GM12878 (cell line): ENCODE measurements at regions of chr12 and their contacts with region 1.

Region 1: GRCh38 chr12:103965590-103966504 is at the start of gene TDG:
- DNase-seq: peak; percentile 97
- ATAC-seq: peak; percentile 96
- H3K4me3 ChIP-seq: peak within 1 kb of the TSS; percentile 92
- H3K27ac ChIP-seq: peak within 1 kb of the TSS; percentile 94
- H3K4me1 ChIP-seq: peaks cover 10% of the 10 kb centered on the region
- H3K27me3 ChIP-seq: no peaks in the 10 kb centered on the region
- CTCF ChIP-seq: peak in 1 of 3 experiments; percentile 23; a peak in 1 of 6 replicates
- EP300 ChIP-seq: no peak
- POLR2A ChIP-seq: peak; percentile 96
- RAD21 ChIP-seq: no peak
- polyA plus RNA-seq, gene TDG: 29.7 to 33.7 TPM

Region 2: DNA sequence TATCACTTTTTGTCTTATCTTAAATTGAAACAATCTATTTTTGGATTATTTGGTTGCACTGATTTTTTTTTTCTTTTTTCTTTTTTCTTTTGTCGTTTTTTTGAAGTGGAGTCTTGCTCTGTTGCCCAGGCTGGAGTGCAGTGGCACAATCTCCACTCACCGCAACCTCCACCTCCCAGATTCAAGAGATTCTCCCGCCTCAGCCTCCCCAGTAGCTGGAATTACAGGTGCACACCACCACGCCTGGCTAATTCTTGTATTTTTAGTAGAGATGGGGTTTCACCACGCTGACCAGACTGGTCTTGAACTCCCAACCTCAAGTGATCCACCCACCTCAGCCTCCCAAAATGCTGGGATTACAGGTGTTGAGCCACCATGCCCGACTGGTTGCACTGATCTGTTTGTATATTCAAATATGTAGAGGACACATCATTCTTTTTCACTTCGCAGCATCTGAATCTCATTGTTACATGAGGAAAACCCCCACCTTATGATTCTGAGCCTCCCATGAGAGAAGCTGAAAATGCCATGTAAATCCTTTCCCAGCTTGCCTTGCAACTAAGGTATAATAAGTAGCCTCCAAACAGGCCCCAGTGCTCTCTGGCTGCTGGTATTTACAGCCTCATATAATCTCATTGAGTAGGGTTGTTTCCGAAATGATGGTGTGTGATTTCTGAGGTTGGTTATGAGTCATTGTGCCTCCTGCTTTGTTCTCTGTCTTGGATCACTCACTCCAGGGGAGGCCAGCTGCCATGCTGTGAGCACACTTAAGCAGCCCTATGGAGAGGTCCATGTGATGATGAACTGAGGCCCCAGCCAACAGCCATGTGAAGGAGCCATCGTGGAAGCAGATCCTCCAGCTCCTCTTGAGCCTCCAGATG is 40.8 kb before region 1 on chr12:
- CTCF ChIA-PET with region 1: interaction called, 33 read pairs
- POLR2A ChIA-PET with region 1: interaction called, 52 read pairs
- RAD21 ChIA-PET with region 1: interaction called, 14 read pairs
- SMC1A ChIA-PET with region 1: interaction called, 15 read pairs
- in situ Hi-C with region 1: no loop called
- intact Hi-C with region 1: loop called (anchors 2 kb)
- DNase-seq: peak; percentile 96
- ATAC-seq: peak; percentile 60
- H3K4me3 ChIP-seq: peak overlapping the region; percentile 56
- H3K27ac ChIP-seq: peak overlapping the region; percentile 74
- H3K4me1 ChIP-seq: peaks cover 24% of the 10 kb centered on the region
- H3K27me3 ChIP-seq: no peaks in the 10 kb centered on the region
- CTCF ChIP-seq: no peak
- EP300 ChIP-seq: peak; percentile 71 to 77; a peak in 2 of 4 replicates
- POLR2A ChIP-seq: peak; percentile 92
- RAD21 ChIP-seq: 0 out of 2 replicates have a peak, but pooled peaks have one; percentile 15